Heart right ventricle (tissue), 16 donors: ENCODE measurements at regions of chr3 and their contacts with region 1.

Region 1: DNA sequence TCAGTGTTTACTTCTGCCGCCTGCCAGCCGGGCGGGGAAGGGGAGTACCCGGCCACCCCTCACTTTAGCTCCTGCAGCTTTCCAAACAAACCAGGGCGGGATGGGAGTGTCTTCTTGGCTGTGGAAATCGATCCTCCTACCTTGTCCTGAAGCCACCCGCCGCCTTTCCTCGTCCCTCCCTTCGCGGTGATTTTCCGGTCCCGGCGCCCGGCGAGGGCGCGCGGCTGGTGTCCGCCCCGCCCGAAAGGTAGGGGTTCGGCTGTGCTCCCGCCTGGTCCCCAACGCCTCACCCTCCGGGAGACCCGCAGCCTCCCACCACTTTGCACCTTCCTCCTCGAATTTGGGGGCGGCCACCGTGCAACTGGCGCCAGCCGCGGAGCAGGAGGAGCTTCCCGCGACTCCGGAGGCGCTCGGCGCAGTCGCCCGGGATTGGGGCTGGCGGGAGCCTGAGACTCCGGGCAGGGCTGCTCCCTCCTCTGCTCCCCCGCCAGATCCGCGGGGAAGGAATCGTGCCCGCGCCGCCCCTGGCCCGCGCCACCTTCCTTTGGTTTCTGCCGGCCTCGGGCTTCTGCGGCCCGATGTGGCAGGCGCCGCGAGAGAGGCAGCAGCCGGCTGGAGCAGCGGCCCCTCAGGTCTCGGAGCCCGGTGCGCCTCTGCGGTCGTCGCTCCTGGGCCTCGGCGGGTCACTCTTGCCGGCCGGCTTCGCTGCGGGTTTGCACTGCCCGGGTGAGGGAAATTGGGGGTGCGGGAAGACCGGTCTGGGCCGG is 30.7 kb upstream of the ST3GAL6 start:
- DNase-seq: peak; percentile 59 to 66
- ATAC-seq: peak; percentile 67 to 88 (median 74)
- H3K4me3 ChIP-seq: peak overlapping the region; percentile 76 to 97 (median 90)
- H3K27ac ChIP-seq: peak overlapping the region; percentile 82 to 96 (median 91)
- H3K4me1 ChIP-seq: peaks cover 0 to 46% (median 19%) of the 10 kb centered on the region in 9 donors
- H3K27me3 ChIP-seq: peaks cover 0 to 33% (median 0%) of the 10 kb centered on the region in 7 donors
- CTCF ChIP-seq: peak in 1 of 9 donors; percentile 4

Region 2: DNA sequence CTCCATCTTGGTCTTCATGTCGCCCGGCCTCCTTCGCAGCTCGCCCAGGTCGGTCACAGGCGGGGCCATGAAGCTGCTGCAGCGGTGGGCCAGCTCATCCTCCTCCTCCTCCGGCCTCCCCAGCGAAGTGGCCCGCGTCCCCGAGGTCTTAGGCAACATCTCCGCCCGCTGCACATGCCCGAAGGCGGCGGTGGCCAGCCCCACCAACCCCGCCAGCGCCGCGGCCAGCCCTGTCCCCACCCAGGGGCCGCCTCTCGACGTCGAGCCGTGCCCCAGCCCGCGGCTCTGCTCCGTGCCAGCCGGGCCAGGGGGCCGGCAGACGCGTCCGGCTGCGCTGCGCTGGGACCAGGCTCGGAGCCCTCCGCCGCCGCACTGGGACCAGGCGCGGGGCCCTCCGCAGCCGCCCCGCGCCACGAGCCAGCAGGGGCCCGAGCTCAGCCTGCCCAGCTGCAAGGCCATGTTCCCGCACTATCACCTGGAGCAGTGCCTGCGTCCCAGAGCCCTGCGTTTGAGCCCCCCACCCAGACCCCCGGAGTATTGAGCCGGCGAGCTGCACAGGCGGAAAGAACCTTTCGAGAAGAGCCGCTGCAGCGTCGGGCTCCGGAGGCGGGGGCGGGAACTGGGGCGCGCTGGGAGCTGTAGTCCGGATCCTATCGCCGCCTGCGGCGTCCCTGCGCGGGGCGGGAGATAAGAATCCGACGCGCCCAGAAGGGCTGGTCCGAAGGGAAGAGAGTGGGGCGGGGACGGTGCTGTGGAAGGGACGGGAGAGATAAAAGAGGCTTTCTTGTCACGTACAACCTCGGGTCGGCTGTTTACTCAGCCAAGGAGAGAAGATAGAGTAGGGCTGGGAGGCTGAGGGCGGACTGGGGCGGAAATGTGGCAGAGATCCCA is 139.2 kb before region 1 on chr3 and contains the start of gene CPOX:
- intact Hi-C with region 1: loop called in 1 of 10 experiments (anchors 10 kb)
- DNase-seq: peak; percentile 89 to 91
- ATAC-seq: peak; percentile 97 to 99 (median 98)
- H3K4me3 ChIP-seq: peak within 1 kb of the TSS; percentile 65 to 86 (median 78)
- H3K27ac ChIP-seq: peak within 1 kb of the TSS; percentile 27 to 93 (median 82)
- H3K4me1 ChIP-seq: peaks cover 0 to 37% (median 23%) of the 10 kb centered on the region in 9 donors
- H3K27me3 ChIP-seq: no peaks in the 10 kb centered on the region
- CTCF ChIP-seq: peak in 1 of 9 donors; percentile 7
- total RNA-seq, gene CPOX: 7.7 to 12.5 (median 11.0) TPM

Region 3: DNA sequence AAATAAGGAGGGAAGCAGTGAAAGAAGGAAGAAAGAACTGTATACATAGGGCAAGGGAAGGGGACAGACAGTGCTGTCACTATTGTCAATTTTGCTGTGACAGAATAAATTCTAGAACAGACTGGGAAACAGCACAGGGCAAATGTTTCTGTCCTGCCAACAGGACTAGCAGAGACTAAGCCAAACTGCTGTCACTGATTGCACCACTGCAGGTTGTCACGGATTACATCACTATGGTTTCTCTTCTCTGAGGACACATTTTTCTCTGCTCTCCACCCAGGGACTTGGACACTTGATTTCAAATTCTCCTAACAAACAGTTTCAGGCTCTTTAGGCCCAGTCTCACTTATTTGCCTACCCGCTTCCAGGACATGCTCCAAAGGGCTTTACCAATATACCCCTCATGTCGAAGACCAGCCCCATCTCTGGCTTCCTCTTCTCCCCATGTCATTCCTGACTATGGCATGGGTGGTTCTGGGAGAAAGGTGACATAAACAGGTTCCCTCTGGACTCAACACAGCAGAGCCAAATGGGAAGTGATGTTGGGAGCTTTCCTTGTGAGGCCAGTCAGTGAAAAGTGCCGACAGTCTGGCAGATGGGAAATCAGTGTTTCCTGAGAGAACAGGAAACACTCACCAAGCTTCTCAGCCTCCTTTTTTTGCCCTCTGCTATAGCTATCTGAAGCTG is 39.5 kb before region 1 on chr3:
- intact Hi-C with region 1: loop called in 1 of 10 experiments (anchors 2 kb)
- DNase-seq: no peak
- ATAC-seq: peak in 7 of 8 donors; percentile 61 to 91 (median 84)
- H3K4me3 ChIP-seq: no peak overlapping the region
- H3K27ac ChIP-seq: peak overlapping the region in 8 of 10 donors; percentile 0 to 80 (median 60)
- H3K4me1 ChIP-seq: peaks cover 0 to 16% (median 0%) of the 10 kb centered on the region in 9 donors
- H3K27me3 ChIP-seq: no peaks in the 10 kb centered on the region
- CTCF ChIP-seq: no peak

Region 4: GRCh38 chr3:98763076-98763475 is 30.6 kb after region 1 on chr3 and contains the start of gene ST3GAL6:
- intact Hi-C with region 1: loop called in 3 of 10 experiments (anchors 5 kb)
- DNase-seq: peak in 1 of 2 donors; percentile 48
- ATAC-seq: peak; percentile 43 to 74 (median 62)
- H3K4me3 ChIP-seq: peak within 1 kb of the TSS in 6 of 10 donors; percentile 7 to 48 (median 24)
- H3K27ac ChIP-seq: peak within 1 kb of the TSS in 8 of 10 donors; percentile 25 to 85 (median 70)
- H3K4me1 ChIP-seq: peaks cover 8 to 99% (median 93%) of the 10 kb centered on the region in 9 donors
- H3K27me3 ChIP-seq: no peaks in the 10 kb centered on the region
- CTCF ChIP-seq: no peak
- total RNA-seq, gene ST3GAL6: 27.3 to 92.9 (median 62.6) TPM

Region 5: GRCh38 chr3:98778852-98779413 is 46.5 kb after region 1 on chr3:
- intact Hi-C with region 1: loop called in 4 of 10 experiments (anchors 5 kb)
- DNase-seq: peak in 1 of 2 donors; percentile 34
- ATAC-seq: peak; percentile 64 to 82 (median 74)
- H3K4me3 ChIP-seq: no peak overlapping the region
- H3K27ac ChIP-seq: peak overlapping the region in 7 of 10 donors; percentile 21 to 73 (median 51)
- H3K4me1 ChIP-seq: peaks cover 19 to 65% (median 49%) of the 10 kb centered on the region in 9 donors
- H3K27me3 ChIP-seq: no peaks in the 10 kb centered on the region
- CTCF ChIP-seq: no peak

Region 6: GRCh38 chr3:98801043-98801747 is 68.7 kb after region 1 on chr3:
- intact Hi-C with region 1: loop called in 1 of 10 experiments (anchors 5 kb)
- DNase-seq: no peak
- ATAC-seq: peak in 2 of 8 donors; percentile 10 to 34
- H3K4me3 ChIP-seq: no peak overlapping the region
- H3K27ac ChIP-seq: no peak overlapping the region
- H3K4me1 ChIP-seq: no peaks in the 10 kb centered on the region
- H3K27me3 ChIP-seq: no peaks in the 10 kb centered on the region
- CTCF ChIP-seq: peak in 5 of 9 donors; percentile 6 to 20 (median 11)